Mammary epithelial cell (primary cell): ENCODE measurements at regions of chr9 and their contacts with region 1.

Region 1: GRCh38 chr9:136400038-136400834 is at the start of gene SNAPC4:
- DNase-seq: peak; percentile 78
- H3K4me3 ChIP-seq: peak within 1 kb of the TSS; percentile 84 to 97 (median 89)
- H3K27ac ChIP-seq: peak within 1 kb of the TSS; percentile 64
- H3K4me1 ChIP-seq: peaks cover 15% of the 10 kb centered on the region
- H3K27me3 ChIP-seq: no peaks in the 10 kb centered on the region
- CTCF ChIP-seq: peak; percentile 72 to 79
- total RNA-seq, gene SNAPC4: 7.0 to 9.2 TPM

Region 2: DNA sequence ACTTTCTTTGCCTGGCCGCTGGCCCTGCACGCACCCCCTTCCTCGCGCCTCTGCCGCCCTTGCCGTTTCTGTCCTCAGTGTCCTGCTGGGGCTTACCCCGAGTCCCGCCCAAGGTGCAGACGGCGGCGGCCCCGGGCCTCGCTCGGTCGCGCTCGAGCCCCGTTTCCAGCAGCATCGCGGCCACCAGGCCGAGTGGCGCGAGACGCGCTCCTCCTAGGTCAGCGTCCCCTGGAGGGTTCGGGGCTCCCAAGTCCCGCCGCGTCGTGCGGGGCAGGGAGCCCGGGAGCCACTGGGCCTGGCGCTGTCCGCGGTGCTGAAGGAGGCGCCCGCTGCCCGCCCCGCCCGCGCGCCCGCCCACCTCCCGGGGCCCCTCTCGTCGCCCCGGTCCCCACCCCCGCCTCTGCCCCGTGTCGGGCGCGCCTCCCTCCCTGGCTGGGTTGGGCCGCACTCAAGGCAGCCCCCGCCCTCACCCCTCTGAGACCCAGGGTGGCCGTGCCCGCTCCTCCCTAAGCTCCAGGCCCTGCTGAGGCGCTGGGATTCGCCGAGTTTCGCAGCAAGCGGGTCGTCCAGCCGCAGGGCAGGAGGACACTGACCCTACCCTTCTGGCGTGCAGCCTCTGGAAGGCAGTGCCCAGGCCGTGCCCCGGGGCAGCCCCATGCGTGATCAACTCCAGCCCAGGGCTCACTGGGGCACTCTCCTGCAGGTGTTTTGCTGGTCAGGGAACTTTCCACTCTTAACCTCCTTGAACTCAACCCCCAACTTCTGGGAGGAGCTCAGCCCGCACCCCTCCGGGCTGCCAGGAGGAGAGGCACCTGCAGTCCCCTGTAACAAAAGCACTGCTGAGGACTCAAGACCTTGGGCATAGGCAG is 195.2 kb before region 1 on chr9 and contains the start of gene LHX3:
- CTCF ChIA-PET with region 1: no interaction called
- dilution Hi-C with region 1: no loop called
- in situ Hi-C with region 1: no loop called
- intact Hi-C with region 1: no loop called
- DNase-seq: no peak
- H3K4me3 ChIP-seq: no peak within 1 kb of the TSS
- H3K27ac ChIP-seq: no peak within 1 kb of the TSS
- H3K4me1 ChIP-seq: no peaks in the 10 kb centered on the region
- H3K27me3 ChIP-seq: peaks cover 43% of the 10 kb centered on the region
- CTCF ChIP-seq: no peak
- total RNA-seq, gene LHX3: not detected

Region 3: GRCh38 chr9:136312436-136312835 is 87.8 kb before region 1 on chr9:
- CTCF ChIA-PET with region 1: no interaction called
- dilution Hi-C with region 1: no loop called
- in situ Hi-C with region 1: no loop called
- intact Hi-C with region 1: loop called (anchors 1 kb)
- DNase-seq: no peak
- H3K4me3 ChIP-seq: no peak overlapping the region
- H3K27ac ChIP-seq: no peak overlapping the region
- H3K4me1 ChIP-seq: peaks cover 15% of the 10 kb centered on the region
- H3K27me3 ChIP-seq: no peaks in the 10 kb centered on the region
- CTCF ChIP-seq: peak; percentile 46 to 88

Region 4: GRCh38 chr9:136327313-136327974 is 72.8 kb before region 1 on chr9 and contains the start of gene GPSM1:
- CTCF ChIA-PET with region 1: no interaction called
- dilution Hi-C with region 1: no loop called
- in situ Hi-C with region 1: loop called in 1 of 2 experiments (anchors 10 kb)
- intact Hi-C with region 1: no loop called
- DNase-seq: no peak
- H3K4me3 ChIP-seq: peak within 1 kb of the TSS; percentile 49 to 60 (median 57)
- H3K27ac ChIP-seq: no peak within 1 kb of the TSS
- H3K4me1 ChIP-seq: peaks cover 30% of the 10 kb centered on the region
- H3K27me3 ChIP-seq: no peaks in the 10 kb centered on the region
- CTCF ChIP-seq: no peak
- total RNA-seq, gene GPSM1: 34.3 to 34.4 TPM

Region 5: GRCh38 chr9:136339173-136339957 is 60.9 kb before region 1 on chr9:
- CTCF ChIA-PET with region 1: interaction called, 3 read pairs
- dilution Hi-C with region 1: no loop called
- in situ Hi-C with region 1: no loop called
- intact Hi-C with region 1: loop called (anchors 1 kb)
- DNase-seq: peak; percentile 38
- H3K4me3 ChIP-seq: no peak overlapping the region
- H3K27ac ChIP-seq: no peak overlapping the region
- H3K4me1 ChIP-seq: peaks cover 14% of the 10 kb centered on the region
- H3K27me3 ChIP-seq: no peaks in the 10 kb centered on the region
- CTCF ChIP-seq: peak; percentile 93